PC-9 (cell line): ENCODE measurements at regions of chr1 and their contacts with region 1.

Region 1: DNA sequence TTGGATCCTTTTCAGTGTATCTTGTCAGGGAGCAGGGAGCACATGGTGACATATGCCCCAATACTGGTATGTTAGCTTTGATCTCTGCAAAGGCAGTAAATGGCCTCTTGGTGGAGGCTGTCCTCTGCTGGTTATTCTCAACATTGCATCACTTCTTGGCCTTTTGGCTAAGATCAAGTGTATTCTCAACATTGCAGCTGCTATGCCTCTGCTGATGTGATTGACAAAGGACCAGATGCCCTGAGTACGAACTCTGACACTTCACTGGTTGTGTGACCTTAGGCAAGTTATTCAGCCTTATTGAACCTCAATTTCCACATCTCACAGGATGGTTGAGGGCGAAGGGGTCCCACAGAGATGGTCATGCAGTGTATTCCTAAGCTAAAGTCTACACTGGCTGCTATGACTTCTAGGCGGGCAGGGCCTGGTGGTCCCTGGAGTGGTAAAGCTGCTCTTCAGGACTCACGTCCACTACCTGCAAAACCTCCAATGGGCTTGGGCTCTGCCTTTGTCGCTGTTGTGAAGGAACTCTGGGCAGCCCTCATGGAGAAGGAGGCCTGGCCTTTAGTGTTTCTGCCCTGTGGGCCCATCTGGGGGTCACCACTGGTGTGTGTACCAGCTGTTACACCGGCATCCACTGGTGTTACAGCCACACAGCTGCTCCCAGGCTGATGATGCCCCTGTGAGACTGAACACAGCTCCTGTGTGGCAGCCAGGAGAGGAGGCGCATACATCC is 64.8 kb downstream of the DNTTIP2 start:
- DNase-seq: peak; percentile 69 to 84
- H3K4me3 ChIP-seq: no peak overlapping the region
- H3K27ac ChIP-seq: peak overlapping the region; percentile 83
- H3K4me1 ChIP-seq: peaks cover 77% of the 10 kb centered on the region
- H3K27me3 ChIP-seq: no peaks in the 10 kb centered on the region
- CTCF ChIP-seq: peak; percentile 98

Region 2: DNA sequence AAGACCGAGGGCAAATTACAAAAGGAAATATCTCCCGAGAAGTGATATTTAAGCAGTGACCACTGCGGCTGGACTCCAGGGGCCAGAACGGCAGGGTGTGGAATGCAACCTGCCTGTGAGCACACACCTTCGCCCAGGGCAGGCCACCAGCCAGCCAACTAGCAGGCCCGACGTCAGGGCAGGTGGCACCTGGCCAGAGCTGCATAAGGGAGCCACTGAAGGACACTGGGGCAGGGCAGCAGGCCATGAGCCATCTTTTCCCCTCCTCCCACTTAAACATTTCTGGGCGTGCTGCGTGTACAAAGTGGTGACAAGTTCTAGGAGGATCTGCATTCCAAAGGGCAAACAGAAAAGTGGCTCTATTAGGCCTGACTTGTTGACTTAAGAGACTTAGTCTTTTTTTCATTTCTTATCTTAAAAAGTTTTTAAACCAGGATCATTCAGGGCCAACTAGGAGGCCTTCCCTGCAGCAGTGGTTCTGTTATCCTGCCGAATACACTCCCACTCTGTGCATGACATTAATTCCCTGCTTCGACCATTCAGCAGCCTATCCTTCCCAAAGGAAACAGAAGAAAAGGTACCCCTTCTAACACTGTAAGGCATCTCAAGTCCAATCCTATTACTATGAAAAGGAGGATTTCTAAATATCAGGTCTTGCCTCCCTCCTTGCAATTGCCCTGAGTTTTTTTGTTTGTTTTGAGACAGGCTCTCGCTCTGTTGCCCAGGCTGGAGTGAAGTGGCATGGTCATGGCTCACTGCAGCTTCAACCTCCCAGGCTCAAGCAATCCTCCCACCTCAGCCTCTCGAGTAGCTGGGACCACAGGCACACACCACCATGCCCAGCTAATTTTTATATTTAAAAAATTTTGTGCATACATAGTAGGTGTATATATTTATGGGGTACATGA is 228.9 kb before region 1 on chr1:
- CTCF ChIA-PET with region 1: no interaction called
- POLR2A ChIA-PET with region 1: no interaction called
- intact Hi-C with region 1: loop called (anchors 2 kb)
- DNase-seq: peak; percentile 99 to 100
- H3K4me3 ChIP-seq: peak overlapping the region; percentile 33; the same call in 1 of the 2 replicates
- H3K27ac ChIP-seq: peak overlapping the region; percentile 83
- H3K4me1 ChIP-seq: peaks cover 98% of the 10 kb centered on the region
- H3K27me3 ChIP-seq: no peaks in the 10 kb centered on the region
- CTCF ChIP-seq: no peak

Region 3: DNA sequence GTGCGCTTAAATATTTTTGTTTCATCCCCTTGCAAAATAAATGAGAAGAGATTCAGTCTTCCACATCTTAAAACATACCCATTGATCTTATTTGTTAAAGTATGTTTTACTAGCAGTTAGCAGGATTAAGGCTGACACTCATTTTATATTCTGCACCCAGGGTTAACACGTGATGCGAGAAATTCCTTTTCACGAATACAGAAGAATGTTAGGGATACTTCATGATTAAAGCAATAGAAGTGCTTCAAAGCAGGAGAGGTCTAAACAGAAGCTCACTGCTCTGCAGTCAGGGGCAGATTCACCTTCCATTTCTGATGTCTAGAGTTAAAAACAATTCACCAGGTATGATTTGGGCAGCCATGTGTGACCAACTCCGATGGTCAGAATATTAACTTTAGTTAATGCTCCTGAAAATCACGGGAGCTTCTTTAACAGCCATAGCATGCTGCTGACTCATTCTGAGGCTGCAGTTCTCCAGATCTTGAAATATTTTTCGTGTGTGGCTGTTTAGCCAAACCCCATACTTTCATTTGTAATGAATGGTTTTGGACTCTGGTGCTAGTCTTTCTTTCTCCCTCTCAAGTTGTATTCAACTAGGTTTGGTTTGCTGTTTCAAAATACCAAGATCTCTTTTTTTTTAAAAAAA is 152.3 kb before region 1 on chr1:
- CTCF ChIA-PET with region 1: interaction called, 11 read pairs
- POLR2A ChIA-PET with region 1: interaction called, 3 read pairs
- intact Hi-C with region 1: no loop called
- DNase-seq: peak; percentile 60 to 83
- H3K4me3 ChIP-seq: peak overlapping the region; percentile 1; the same call in 1 of the 2 replicates
- H3K27ac ChIP-seq: peak overlapping the region; percentile 86
- H3K4me1 ChIP-seq: peaks cover 74% of the 10 kb centered on the region
- H3K27me3 ChIP-seq: no peaks in the 10 kb centered on the region
- CTCF ChIP-seq: no peak

Region 4: DNA sequence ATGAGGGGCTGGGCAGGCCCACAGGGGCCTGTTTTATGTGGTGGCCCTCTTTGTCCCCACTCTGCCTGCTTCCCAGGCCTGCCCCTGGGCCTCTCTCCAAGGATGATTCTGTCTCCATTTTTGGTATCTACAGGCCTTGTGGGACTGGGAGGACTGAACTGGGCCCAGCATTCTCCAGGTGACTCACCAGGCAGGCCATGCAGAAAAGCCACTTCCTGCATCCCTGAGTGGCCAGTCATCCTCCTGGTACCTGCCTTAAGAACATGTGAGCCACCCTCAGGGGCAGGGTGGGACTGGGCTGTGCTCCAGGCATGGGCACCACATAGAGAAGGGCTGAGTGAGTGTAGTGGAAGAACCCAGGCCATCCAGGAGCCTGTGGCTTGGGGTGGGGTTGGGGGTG is 112.6 kb before region 1 on chr1:
- CTCF ChIA-PET with region 1: interaction called, 3 read pairs
- POLR2A ChIA-PET with region 1: interaction called, 27 read pairs
- intact Hi-C with region 1: loop called (anchors 1 kb)
- DNase-seq: peak; percentile 97 to 100
- H3K4me3 ChIP-seq: no peak overlapping the region
- H3K27ac ChIP-seq: peak overlapping the region; percentile 97
- H3K4me1 ChIP-seq: peaks cover 68% of the 10 kb centered on the region
- H3K27me3 ChIP-seq: no peaks in the 10 kb centered on the region
- CTCF ChIP-seq: no peak

Region 5: DNA sequence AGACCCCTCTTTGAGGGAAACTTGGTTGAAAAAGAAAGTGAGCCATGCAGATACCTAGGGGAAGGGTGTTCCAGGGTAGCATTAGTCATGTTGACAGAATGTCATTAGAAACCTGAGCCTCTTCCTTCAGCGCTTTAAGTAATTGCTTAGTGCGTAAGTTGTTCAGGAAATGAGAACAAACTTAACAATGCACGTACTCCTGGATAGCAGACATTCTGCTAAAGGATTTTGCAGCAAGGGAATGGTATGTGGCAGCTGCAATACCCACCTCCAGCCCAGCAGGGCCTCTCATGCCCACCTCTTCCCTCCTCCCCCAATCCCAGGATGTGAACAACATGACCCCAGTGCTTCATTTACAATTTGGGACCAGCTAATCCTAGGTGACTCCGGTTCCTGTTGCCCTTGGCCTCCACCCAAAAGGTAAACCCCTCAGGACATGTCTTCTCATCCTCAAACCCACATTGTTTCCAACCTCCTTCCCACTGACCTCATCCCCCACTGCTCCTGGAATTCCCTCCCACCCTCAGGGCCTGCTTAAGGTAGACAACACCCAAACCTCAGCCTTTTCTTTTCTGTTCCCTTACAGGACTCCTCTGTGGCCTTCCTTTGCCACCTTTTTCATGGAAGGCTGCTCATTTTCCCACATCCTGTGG is 34.6 kb before region 1 on chr1:
- CTCF ChIA-PET with region 1: no interaction called
- POLR2A ChIA-PET with region 1: no interaction called
- intact Hi-C with region 1: loop called (anchors 1 kb)
- DNase-seq: peak; percentile 93 to 100
- H3K4me3 ChIP-seq: peak overlapping the region; percentile 15; the same call in 1 of the 2 replicates
- H3K27ac ChIP-seq: peak overlapping the region; percentile 95
- H3K4me1 ChIP-seq: peaks cover 77% of the 10 kb centered on the region
- H3K27me3 ChIP-seq: no peaks in the 10 kb centered on the region
- CTCF ChIP-seq: peak; percentile 31; the same call in 1 of the 2 replicates